Right ventricle myocardium inferior (tissue), 1 donor: ENCODE measurements at regions of chr19 and their contacts with region 1.

Region 1: GRCh38 chr19:6218491-6219162 is 61.1 kb downstream of the MLLT1 start:
- DNase-seq: peak; percentile 93
- ATAC-seq: peak; percentile 78

Region 2: GRCh38 chr19:6048808-6049405 is 169.7 kb before region 1 on chr19:
- intact Hi-C with region 1: loop called (anchors 10 kb)
- DNase-seq: peak; percentile 88
- ATAC-seq: peak; percentile 97

Region 3: DNA sequence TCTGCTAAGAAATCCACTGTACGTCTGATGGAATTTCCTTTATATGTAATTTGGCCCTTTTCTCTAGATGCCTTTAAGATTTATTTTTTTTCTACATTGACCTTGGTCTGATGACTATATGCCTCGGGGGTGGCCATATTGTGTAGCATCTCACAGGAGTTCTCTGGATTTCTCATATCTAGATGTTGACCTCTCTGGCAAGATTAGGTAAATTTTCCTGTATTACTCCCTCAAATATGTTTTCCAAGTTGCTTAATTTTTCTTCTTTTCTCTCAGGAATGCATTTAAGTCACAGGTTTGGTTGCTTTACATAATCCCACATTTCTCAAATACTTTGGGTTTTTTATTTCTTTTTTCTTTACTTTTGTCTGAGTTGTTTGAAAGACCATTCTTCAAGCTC is 47.1 kb before region 1 on chr19:
- intact Hi-C with region 1: no loop called
- DNase-seq: no peak
- ATAC-seq: no peak

Region 4: DNA sequence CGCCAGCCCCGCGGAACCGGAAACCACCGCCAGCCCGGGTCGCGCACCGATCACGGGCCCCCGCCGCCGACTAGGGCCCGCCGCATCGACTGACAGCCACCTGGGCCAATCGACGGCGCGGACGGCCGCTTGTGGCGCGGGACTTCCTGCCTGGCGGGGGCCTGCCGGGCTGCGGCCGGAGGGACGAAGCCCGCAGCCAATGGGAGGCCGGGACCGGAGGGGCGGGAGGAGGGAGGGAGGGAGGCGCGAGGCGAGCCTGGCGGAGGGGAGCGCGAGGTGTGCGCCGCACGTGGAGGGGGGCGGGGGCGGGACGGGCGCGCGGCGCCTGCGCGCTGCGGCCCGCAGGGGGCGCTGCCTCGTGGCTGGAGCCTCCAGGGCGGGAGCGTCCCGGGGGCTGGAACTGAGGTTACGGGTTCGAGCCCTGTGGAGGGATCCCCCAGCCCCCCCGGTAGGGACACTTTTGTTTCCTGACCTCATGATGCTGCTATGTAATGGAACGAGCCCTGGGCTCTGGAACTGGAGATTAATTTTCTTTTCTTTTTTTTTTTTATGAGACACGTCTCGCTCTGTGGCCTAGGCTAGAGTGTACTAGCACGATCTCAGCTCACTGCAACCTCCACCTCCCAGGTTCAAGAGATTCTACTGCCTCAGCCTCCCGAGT is 61.4 kb after region 1 on chr19 and contains the start of gene MLLT1:
- intact Hi-C with region 1: loop called (anchors 1 kb)
- DNase-seq: peak; percentile 98
- ATAC-seq: peak; percentile 98
- total RNA-seq, gene MLLT1: 40.1 TPM

Region 5: GRCh38 chr19:6297202-6297601 is 78.6 kb after region 1 on chr19:
- intact Hi-C with region 1: loop called (anchors 1 kb)
- DNase-seq: no peak
- ATAC-seq: no peak